ENCODE measurements at regions of chr16 and their contacts with region 1.

Region 1: GRCh38 chr16:89507834-89508590 is at the start of gene SPG7:
- DNase-seq: peak; percentile 95 to 96
- ATAC-seq: peak; percentile 63 to 84 (median 75)
- H3K4me3 ChIP-seq: peak within 1 kb of the TSS; percentile 61
- H3K4me3 Mint-ChIP-seq: peak within 1 kb of the TSS; percentile 86
- H3K27ac ChIP-seq: peak within 1 kb of the TSS; percentile 91
- H3K27ac Mint-ChIP-seq: peak within 1 kb of the TSS; percentile 78 to 87
- H3K4me1 ChIP-seq: peaks cover 44% of the 10 kb centered on the region
- H3K4me1 Mint-ChIP-seq: peaks cover 26 to 28% of the 10 kb centered on the region in 2 donors
- H3K27me3 ChIP-seq: no peaks in the 10 kb centered on the region
- H3K27me3 Mint-ChIP-seq: no peaks in the 10 kb centered on the region
- CTCF ChIP-seq: no peak
- total RNA-seq, gene SPG7: 142 to 195 (median 180) TPM

Region 2: GRCh38 chr16:89319883-89320781 is 187.9 kb before region 1 on chr16:
- intact Hi-C with region 1: loop called (anchors 5 kb)
- DNase-seq: peak in 1 of 2 donors; percentile 49
- ATAC-seq: peak in 2 of 3 donors; percentile 24 to 36
- H3K4me3 ChIP-seq: no peak overlapping the region
- H3K4me3 Mint-ChIP-seq: peak overlapping the region; percentile 80
- H3K27ac ChIP-seq: no peak overlapping the region
- H3K27ac Mint-ChIP-seq: peak overlapping the region; percentile 70 to 98
- H3K4me1 ChIP-seq: peaks cover 97% of the 10 kb centered on the region
- H3K4me1 Mint-ChIP-seq: peaks cover 79 to 85% of the 10 kb centered on the region in 2 donors
- H3K27me3 ChIP-seq: no peaks in the 10 kb centered on the region
- H3K27me3 Mint-ChIP-seq: no peaks in the 10 kb centered on the region
- CTCF ChIP-seq: no peak

Region 3: DNA sequence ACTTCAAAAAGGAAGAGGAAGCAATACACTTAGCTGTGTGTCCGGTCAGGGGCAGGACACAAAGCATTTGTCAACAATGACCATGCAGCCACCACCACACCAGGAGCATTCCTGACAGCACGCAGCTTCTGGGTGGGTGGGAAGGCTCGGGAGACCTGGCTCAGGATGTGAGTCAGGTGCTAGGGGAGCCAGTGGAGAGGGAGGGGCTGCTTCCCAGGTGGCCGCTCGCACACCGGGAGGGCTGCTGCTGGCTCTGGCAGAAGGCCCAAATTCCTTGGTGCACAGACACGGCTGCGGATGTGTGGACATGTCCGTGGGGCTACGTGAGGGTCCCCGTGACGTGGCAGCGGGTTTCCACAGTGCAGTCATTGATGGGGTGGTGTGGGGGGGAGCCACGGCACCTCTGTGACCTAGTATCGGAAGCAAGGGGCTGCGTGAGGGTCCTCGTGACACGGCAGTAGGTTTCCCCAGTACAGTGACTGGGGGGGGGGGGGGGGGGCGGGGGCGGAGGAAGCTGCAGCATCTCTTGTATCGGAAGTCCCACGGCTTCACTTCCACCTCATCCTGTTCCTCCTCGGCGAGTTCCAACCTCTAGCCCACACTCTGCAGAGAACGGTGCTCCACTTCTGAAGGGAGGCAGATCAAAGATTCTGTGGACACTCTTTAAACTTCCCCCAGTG is 177.7 kb before region 1 on chr16:
- intact Hi-C with region 1: loop called (anchors 1 kb)
- DNase-seq: peak in 1 of 2 donors; percentile 80
- ATAC-seq: peak; percentile 12 to 42 (median 27)
- H3K4me3 ChIP-seq: no peak overlapping the region
- H3K4me3 Mint-ChIP-seq: peak overlapping the region; percentile 40
- H3K27ac ChIP-seq: peak overlapping the region; percentile 51
- H3K27ac Mint-ChIP-seq: peak overlapping the region; percentile 18 to 70
- H3K4me1 ChIP-seq: peaks cover 89% of the 10 kb centered on the region
- H3K4me1 Mint-ChIP-seq: peaks cover 77 to 78% of the 10 kb centered on the region in 2 donors
- H3K27me3 ChIP-seq: no peaks in the 10 kb centered on the region
- H3K27me3 Mint-ChIP-seq: no peaks in the 10 kb centered on the region
- CTCF ChIP-seq: no peak

Region 4: GRCh38 chr16:89560378-89561141 is 52.5 kb after region 1 on chr16 and contains the start of gene RPL13:
- intact Hi-C with region 1: loop called (anchors 2 kb)
- DNase-seq: peak; percentile 90 to 96
- ATAC-seq: peak; percentile 93 to 98 (median 94)
- H3K4me3 ChIP-seq: peak within 1 kb of the TSS; percentile 90
- H3K4me3 Mint-ChIP-seq: peak within 1 kb of the TSS; percentile 99
- H3K27ac ChIP-seq: peak within 1 kb of the TSS; percentile 89
- H3K27ac Mint-ChIP-seq: peak within 1 kb of the TSS; percentile 90 to 98
- H3K4me1 ChIP-seq: peaks cover 39% of the 10 kb centered on the region
- H3K4me1 Mint-ChIP-seq: peaks cover 28 to 36% of the 10 kb centered on the region in 2 donors
- H3K27me3 ChIP-seq: no peaks in the 10 kb centered on the region
- H3K27me3 Mint-ChIP-seq: no peaks in the 10 kb centered on the region
- CTCF ChIP-seq: no peak
- total RNA-seq, gene RPL13: 1,286 to 1,549 (median 1,294) TPM